PC-3 (cell line): ENCODE measurements at regions of chr13 and their contacts with region 1.

Region 1: DNA sequence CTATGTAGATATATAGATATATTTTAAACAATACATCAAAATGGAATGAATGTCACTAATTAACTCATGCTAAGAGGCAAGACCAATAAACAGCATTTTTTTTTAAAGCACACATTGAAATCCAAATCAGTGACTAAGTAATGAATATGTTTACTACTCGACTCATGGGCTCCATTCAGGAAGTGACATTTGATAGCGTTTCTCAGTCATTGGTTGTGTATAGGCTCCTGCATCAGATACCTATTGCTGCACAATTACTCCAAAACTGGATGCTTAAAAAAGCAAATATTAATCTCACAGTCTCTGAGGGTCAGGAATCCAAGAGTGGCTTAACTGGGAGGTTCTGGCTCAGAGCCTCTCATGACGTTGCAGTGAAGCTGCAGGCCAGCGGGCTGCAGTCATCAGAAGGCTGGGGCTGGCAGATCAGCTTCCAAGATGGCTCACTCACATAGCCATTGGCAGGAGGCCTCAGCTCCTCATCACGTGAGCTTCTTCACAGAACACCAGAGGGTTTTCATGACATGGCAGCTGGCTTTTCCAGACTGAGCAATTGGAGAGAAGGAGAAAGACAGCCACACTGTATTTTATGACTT is 525.1 kb upstream of the NBEA start:
- DNase-seq: peak; percentile 67
- ATAC-seq: peak; percentile 56
- H3K4me3 ChIP-seq: no peak overlapping the region
- H3K27ac ChIP-seq: peak overlapping the region; percentile 79
- H3K4me1 ChIP-seq: peaks cover 36% of the 10 kb centered on the region
- H3K27me3 ChIP-seq: no peaks in the 10 kb centered on the region
- CTCF ChIP-seq: no peak

Region 2: GRCh38 chr13:34156841-34157365 is 260.0 kb before region 1 on chr13:
- CTCF ChIA-PET with region 1: no interaction called
- POLR2A ChIA-PET with region 1: no interaction called
- intact Hi-C with region 1: loop called (anchors 1 kb)
- DNase-seq: peak; percentile 96
- ATAC-seq: peak; percentile 90
- H3K4me3 ChIP-seq: peak overlapping the region; percentile 51
- H3K27ac ChIP-seq: peak overlapping the region; percentile 99
- H3K4me1 ChIP-seq: peaks cover 54% of the 10 kb centered on the region
- H3K27me3 ChIP-seq: no peaks in the 10 kb centered on the region
- CTCF ChIP-seq: no peak

Region 3: DNA sequence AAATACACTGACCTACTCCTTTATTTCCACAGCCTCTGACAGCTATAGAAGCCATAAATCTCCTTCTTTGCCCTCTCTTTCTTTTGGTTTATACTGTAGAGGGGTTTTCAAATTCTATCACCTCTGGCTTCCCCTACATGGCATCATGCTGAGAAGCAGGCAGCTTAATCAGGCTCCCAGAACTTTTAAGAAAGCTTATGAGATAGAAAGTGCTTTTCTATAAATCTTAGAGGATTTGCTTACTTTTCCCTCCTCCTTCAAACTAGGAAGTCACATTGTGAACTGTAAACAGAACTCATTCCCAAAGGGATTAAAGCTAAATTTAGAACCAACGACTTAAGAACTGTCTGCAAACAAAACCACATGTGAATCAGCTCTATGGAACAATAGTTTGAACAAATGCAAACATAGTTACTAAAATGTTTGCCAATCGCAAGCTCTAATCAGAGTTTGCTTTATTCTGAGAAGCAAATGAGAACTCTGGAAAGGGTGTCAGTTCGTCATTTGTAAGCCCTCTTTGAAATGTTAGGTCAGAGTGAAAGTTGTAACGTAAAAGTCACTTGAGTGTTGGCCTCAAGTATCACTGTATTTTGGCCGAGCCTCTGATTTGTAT is 254.9 kb before region 1 on chr13:
- CTCF ChIA-PET with region 1: no interaction called
- POLR2A ChIA-PET with region 1: no interaction called
- intact Hi-C with region 1: loop called (anchors 2 kb)
- DNase-seq: peak; percentile 77
- ATAC-seq: peak; percentile 82
- H3K4me3 ChIP-seq: peak overlapping the region; percentile 38; the same call in 1 of the 2 replicates
- H3K27ac ChIP-seq: peak overlapping the region; percentile 95
- H3K4me1 ChIP-seq: peaks cover 33% of the 10 kb centered on the region
- H3K27me3 ChIP-seq: no peaks in the 10 kb centered on the region
- CTCF ChIP-seq: no peak

Region 4: DNA sequence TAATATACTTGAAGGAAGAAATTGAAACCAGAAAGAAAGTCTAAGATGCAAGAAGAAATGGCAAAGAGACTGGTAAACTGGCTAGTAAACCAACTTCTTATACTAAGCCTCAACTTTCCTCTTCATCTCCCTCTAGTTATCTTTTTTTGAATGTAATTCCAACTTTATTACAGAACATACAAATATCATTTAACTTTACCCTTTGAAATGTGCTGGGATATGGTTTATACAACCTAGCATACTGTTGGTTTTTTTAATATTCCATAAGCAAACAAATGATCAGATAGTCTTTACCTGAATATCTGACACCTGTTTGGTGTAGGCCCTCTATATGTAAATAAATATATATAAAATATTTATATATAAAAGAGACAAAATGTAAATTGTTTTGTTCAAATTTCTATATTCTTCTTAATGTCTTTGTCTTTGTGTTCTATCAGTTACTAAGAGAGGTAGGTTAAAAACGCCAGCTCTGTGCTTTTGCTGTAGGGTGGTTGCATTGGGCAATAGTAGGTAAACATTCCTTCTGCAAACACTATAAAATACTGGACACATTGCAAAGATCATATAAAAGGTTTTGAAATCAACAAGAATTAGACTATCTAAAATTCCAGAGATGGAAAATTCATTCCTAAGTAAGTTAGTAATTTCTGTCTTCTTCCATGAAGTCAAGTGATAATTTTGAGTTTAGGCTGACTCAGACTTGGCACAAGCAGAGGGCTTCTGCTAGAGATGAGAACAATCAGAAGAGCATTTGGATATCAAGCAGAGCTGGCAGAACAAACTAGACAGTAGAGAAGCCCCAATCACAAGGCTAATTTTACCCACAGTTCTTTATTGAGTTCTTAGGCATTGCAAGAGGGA is 215.6 kb before region 1 on chr13:
- CTCF ChIA-PET with region 1: no interaction called
- POLR2A ChIA-PET with region 1: no interaction called
- intact Hi-C with region 1: loop called (anchors 1 kb)
- DNase-seq: peak; percentile 83
- ATAC-seq: peak; percentile 91
- H3K4me3 ChIP-seq: no peak overlapping the region
- H3K27ac ChIP-seq: peak overlapping the region; percentile 88
- H3K4me1 ChIP-seq: peaks cover 35% of the 10 kb centered on the region
- H3K27me3 ChIP-seq: no peaks in the 10 kb centered on the region
- CTCF ChIP-seq: no peak

Region 5: GRCh38 chr13:34265016-34265692 is 151.8 kb before region 1 on chr13:
- CTCF ChIA-PET with region 1: no interaction called
- POLR2A ChIA-PET with region 1: no interaction called
- intact Hi-C with region 1: loop called (anchors 10 kb)
- DNase-seq: peak; percentile 78
- ATAC-seq: peak; percentile 87
- H3K4me3 ChIP-seq: no peak overlapping the region; the same call in 1 of the 2 replicates
- H3K27ac ChIP-seq: peak overlapping the region; percentile 93
- H3K4me1 ChIP-seq: peaks cover 19% of the 10 kb centered on the region
- H3K27me3 ChIP-seq: no peaks in the 10 kb centered on the region
- CTCF ChIP-seq: no peak

Region 6: DNA sequence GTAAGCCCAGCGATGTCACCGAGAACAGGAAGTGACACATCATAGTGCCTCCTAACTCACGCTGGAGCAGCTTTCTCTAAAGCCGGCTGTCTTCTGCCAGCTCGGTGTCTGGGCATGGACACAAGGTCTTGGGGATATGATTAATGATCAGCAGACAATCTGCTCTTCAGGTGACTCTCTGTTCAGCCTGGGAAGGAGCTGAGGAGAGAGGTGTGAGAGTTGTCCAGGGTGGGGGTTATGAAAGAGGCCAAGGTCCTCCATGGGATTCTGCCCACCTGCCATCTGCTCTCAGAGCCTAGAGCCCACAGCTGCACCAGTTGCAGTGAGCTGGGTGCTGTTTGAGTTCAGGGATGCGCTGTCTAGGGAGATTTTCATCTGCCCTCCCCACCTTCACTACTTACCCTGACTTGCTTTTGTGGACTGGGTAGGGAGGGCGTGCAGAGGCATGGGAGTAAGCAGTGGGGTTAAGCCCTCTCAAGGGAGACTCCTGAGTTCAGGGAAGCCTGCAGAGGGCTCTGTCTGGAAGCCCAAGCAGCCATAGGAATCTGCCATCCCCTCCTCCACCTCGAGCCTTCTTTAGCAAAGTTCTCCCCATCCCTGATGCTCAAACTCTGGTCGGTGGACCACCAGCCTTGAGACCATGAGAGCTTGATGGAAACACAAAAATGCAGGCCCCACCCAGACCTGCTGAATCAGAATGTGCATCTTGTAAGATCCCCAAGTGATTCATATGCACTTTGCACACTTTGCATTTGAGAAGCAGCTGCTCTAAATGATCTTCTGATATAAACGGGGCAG is 59.3 kb before region 1 on chr13:
- CTCF ChIA-PET with region 1: no interaction called
- POLR2A ChIA-PET with region 1: no interaction called
- intact Hi-C with region 1: loop called (anchors 5 kb)
- DNase-seq: peak; percentile 88
- ATAC-seq: peak; percentile 86
- H3K4me3 ChIP-seq: no peak overlapping the region
- H3K27ac ChIP-seq: peak overlapping the region; percentile 96
- H3K4me1 ChIP-seq: peaks cover 59% of the 10 kb centered on the region
- H3K27me3 ChIP-seq: no peaks in the 10 kb centered on the region
- CTCF ChIP-seq: no peak